GM12878 (cell line): ENCODE measurements at regions of chr12 and their contacts with region 1.

Region 1: DNA sequence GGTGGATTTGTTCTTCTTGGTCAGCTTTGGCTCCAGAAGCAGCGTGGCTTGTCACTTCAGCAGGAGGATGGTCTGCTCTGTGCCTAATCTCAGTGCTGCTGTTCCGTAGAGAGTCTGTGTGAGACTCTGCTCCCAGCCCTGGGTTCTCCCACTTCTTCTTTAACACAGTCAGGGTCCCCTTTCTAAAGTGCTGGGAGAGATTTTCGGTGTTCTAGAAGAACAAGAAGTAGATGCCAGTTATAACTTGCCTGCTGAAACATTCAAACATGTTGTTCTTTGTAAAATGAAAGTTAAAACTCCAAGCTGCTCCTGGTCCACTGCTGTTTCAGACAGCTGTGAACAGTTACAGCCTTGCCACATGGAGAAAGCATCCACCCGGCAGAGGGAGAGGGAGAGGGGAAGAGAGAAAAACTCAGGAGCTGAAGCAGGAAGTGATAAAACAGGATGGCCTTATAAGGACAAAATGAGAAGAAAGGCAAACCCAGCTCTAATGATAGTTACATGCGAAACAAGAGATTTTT is 55.2 kb upstream of the CERS5 start:
- DNase-seq: no peak
- ATAC-seq: peak; percentile 41
- H3K4me3 ChIP-seq: peak overlapping the region; percentile 86
- H3K27ac ChIP-seq: peak overlapping the region; percentile 84
- H3K4me1 ChIP-seq: peaks cover 9% of the 10 kb centered on the region
- H3K27me3 ChIP-seq: no peaks in the 10 kb centered on the region
- CTCF ChIP-seq: no peak
- EP300 ChIP-seq: no peak
- POLR2A ChIP-seq: peak; percentile 56
- RAD21 ChIP-seq: 0 out of 2 replicates have a peak, but pooled peaks have one; percentile 12

Region 2: GRCh38 chr12:49903695-49904423 is 318.5 kb before region 1 on chr12 and contains the start of gene FAIM2:
- CTCF ChIA-PET with region 1: no interaction called
- POLR2A ChIA-PET with region 1: no interaction called
- RAD21 ChIA-PET with region 1: no interaction called
- SMC1A ChIA-PET with region 1: no interaction called
- in situ Hi-C with region 1: no loop called
- intact Hi-C with region 1: no loop called
- DNase-seq: no peak
- ATAC-seq: peak; percentile 59
- H3K4me3 ChIP-seq: no peak within 1 kb of the TSS
- H3K27ac ChIP-seq: no peak within 1 kb of the TSS
- H3K4me1 ChIP-seq: no peaks in the 10 kb centered on the region
- H3K27me3 ChIP-seq: peaks cover 6 to 8% of the 10 kb centered on the region in 2 experiments
- CTCF ChIP-seq: no peak
- EP300 ChIP-seq: no peak
- POLR2A ChIP-seq: no peak
- RAD21 ChIP-seq: no peak
- polyA plus RNA-seq, gene FAIM2: not detected

Region 3: GRCh38 chr12:50151047-50151687 is 71.2 kb before region 1 on chr12:
- CTCF ChIA-PET with region 1: no interaction called
- POLR2A ChIA-PET with region 1: no interaction called
- RAD21 ChIA-PET with region 1: no interaction called
- SMC1A ChIA-PET with region 1: no interaction called
- in situ Hi-C with region 1: no loop called
- intact Hi-C with region 1: no loop called
- DNase-seq: no peak
- ATAC-seq: no peak
- H3K4me3 ChIP-seq: no peak overlapping the region
- H3K27ac ChIP-seq: no peak overlapping the region
- H3K4me1 ChIP-seq: no peaks in the 10 kb centered on the region
- H3K27me3 ChIP-seq: no peaks in the 10 kb centered on the region
- CTCF ChIP-seq: no peak
- EP300 ChIP-seq: no peak
- POLR2A ChIP-seq: no peak
- RAD21 ChIP-seq: no peak

Region 4: DNA sequence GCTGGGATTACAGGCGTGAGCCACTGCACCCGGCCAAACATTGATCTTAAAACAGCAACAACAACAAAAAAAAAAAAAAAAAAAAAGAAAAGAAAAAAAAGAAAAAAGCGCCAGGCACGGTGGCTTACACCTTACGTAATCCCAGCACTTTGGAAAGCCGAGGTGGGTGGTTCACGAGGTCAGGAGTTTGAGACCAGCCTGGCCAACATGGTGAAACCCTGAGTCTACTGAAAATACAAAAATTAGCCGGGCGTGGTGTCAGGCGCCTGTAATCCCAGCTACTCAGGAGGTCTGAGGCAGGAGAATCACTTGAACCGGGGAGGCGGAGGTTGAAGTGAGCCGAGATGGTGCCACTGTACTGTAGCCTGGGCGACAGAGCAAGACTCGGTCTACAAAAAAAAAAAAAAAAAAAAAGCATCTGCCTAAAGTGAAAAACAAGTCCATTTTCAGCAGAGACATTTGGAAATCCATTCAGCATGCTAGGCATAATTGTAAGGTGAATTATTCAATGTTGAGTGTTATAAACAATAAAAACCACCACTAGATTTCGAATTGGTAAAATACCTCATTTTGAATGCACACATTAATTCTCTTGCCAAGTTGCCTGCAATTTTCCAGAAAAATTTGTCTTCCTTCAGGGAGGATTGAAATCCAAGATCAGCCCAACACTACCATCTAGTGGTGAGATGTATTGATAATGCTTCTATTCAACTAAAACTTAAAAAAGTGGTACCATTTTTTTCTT is 47.2 kb before region 1 on chr12:
- CTCF ChIA-PET with region 1: interaction called, 11 read pairs
- POLR2A ChIA-PET with region 1: no interaction called
- RAD21 ChIA-PET with region 1: interaction called, 6 read pairs
- SMC1A ChIA-PET with region 1: interaction called, 4 read pairs
- in situ Hi-C with region 1: no loop called
- intact Hi-C with region 1: no loop called
- DNase-seq: no peak
- ATAC-seq: peak; percentile 34; the same call in 1 of the 3 replicates
- H3K4me3 ChIP-seq: no peak overlapping the region
- H3K27ac ChIP-seq: no peak overlapping the region
- H3K4me1 ChIP-seq: no peaks in the 10 kb centered on the region
- H3K27me3 ChIP-seq: no peaks in the 10 kb centered on the region
- CTCF ChIP-seq: peak; percentile 47 to 64 (median 53); a peak in 5 of 6 replicates
- EP300 ChIP-seq: no peak
- POLR2A ChIP-seq: no peak
- RAD21 ChIP-seq: peak; percentile 73

Region 5: GRCh38 chr12:50211392-50212070 is 10.8 kb before region 1 on chr12:
- CTCF ChIA-PET with region 1: interaction called, 42 read pairs
- POLR2A ChIA-PET with region 1: interaction called, 54 read pairs
- RAD21 ChIA-PET with region 1: interaction called, 63 read pairs
- SMC1A ChIA-PET with region 1: interaction called, 94 read pairs
- in situ Hi-C with region 1: no loop called
- intact Hi-C with region 1: no loop called
- DNase-seq: no peak
- ATAC-seq: peak; percentile 6; the same call in 1 of the 3 replicates
- H3K4me3 ChIP-seq: no peak overlapping the region
- H3K27ac ChIP-seq: no peak overlapping the region; the same call in 1 of the 2 replicates
- H3K4me1 ChIP-seq: peaks cover 13% of the 10 kb centered on the region
- H3K27me3 ChIP-seq: no peaks in the 10 kb centered on the region
- CTCF ChIP-seq: peak in 1 of 3 experiments; percentile 39; a peak in 2 of 6 replicates
- EP300 ChIP-seq: no peak
- POLR2A ChIP-seq: no peak
- RAD21 ChIP-seq: peak; percentile 27; the same call in 1 of the 2 replicates

Region 6: GRCh38 chr12:50246873-50247612 is 24.7 kb after region 1 on chr12:
- CTCF ChIA-PET with region 1: interaction called, 20 read pairs
- POLR2A ChIA-PET with region 1: interaction called, 53 read pairs
- RAD21 ChIA-PET with region 1: interaction called, 51 read pairs
- SMC1A ChIA-PET with region 1: interaction called, 97 read pairs
- in situ Hi-C with region 1: no loop called
- intact Hi-C with region 1: loop called (anchors 2 kb)
- DNase-seq: peak; percentile 62
- ATAC-seq: peak; percentile 80
- H3K4me3 ChIP-seq: peak overlapping the region; percentile 5; the same call in 1 of the 2 replicates
- H3K27ac ChIP-seq: peak overlapping the region; percentile 83
- H3K4me1 ChIP-seq: peaks cover 38% of the 10 kb centered on the region
- H3K27me3 ChIP-seq: no peaks in the 10 kb centered on the region
- CTCF ChIP-seq: no peak
- EP300 ChIP-seq: peak in 1 of 2 experiments; percentile 65; a peak in 1 of 4 replicates
- POLR2A ChIP-seq: no peak
- RAD21 ChIP-seq: no peak

Region 7: GRCh38 chr12:50283229-50283923 is 61.0 kb after region 1 on chr12 and contains the start of gene LIMA1:
- CTCF ChIA-PET with region 1: interaction called, 14 read pairs
- POLR2A ChIA-PET with region 1: interaction called, 22 read pairs
- RAD21 ChIA-PET with region 1: interaction called, 35 read pairs
- SMC1A ChIA-PET with region 1: interaction called, 65 read pairs
- in situ Hi-C with region 1: no loop called
- intact Hi-C with region 1: loop called (anchors 2 kb)
- DNase-seq: peak; percentile 37
- ATAC-seq: peak; percentile 98
- H3K4me3 ChIP-seq: peak within 1 kb of the TSS; percentile 83
- H3K27ac ChIP-seq: peak within 1 kb of the TSS; percentile 66
- H3K4me1 ChIP-seq: peaks cover 10% of the 10 kb centered on the region
- H3K27me3 ChIP-seq: peaks cover 0 to 3% of the 10 kb centered on the region in 2 experiments; a peak in 2 of 4 replicates
- CTCF ChIP-seq: peak; percentile 19 to 37 (median 23); a peak in 2 of 6 replicates
- EP300 ChIP-seq: no peak
- POLR2A ChIP-seq: peak; percentile 93
- RAD21 ChIP-seq: peak; percentile 31
- polyA plus RNA-seq, gene LIMA1: 56.6 to 58.2 TPM

Region 8: DNA sequence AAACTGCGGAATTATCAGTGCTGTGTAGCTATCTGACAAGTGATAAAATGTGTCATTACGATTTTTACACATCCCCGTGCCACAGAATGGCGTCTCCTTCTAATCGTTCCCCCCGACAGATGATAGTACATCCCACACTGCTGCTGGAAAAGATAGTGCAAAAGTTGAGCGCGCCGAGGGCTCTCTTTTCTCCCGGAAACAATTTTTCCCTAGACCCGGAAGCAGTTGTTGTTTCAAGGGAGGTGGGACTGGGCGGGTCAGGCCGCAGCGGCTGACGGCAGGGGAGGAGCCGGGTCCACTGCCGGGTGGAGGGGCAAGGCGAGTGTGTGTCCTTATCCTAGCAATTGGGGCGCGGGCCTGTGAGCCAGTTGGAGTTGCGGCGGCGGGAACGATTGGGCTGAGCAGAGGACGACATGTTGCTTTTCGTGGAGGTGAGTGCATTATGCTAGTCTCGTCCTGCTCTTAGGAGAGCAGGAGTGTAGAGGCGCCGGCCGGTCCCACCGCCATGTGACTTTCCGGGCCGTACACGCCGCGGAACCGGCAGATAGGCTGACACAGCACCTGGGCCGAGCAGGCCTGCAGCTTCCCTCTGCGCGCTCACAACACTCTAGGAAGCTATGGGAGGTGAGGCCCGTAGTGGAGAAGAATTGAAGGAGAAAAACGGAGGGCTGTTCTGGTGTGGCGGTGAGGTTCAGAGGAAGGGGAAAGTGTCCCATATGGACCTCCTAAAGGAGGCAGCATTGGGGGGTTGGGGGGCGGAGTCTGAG is 178.4 kb after region 1 on chr12 and contains the start of gene LARP4:
- CTCF ChIA-PET with region 1: no interaction called
- POLR2A ChIA-PET with region 1: interaction called, 3 read pairs
- RAD21 ChIA-PET with region 1: interaction called, 11 read pairs
- SMC1A ChIA-PET with region 1: interaction called, 6 read pairs
- in situ Hi-C with region 1: no loop called
- intact Hi-C with region 1: no loop called
- DNase-seq: peak; percentile 85
- ATAC-seq: peak; percentile 96
- H3K4me3 ChIP-seq: peak within 1 kb of the TSS; percentile 76
- H3K27ac ChIP-seq: peak within 1 kb of the TSS; percentile 82
- H3K4me1 ChIP-seq: no peaks in the 10 kb centered on the region
- H3K27me3 ChIP-seq: no peaks in the 10 kb centered on the region
- CTCF ChIP-seq: no peak
- EP300 ChIP-seq: no peak
- POLR2A ChIP-seq: peak; percentile 95
- RAD21 ChIP-seq: no peak
- polyA plus RNA-seq, gene LARP4: 24.1 to 26.6 TPM